ENCODE measurements at regions of chr2 and their contacts with region 1.

Region 1: GRCh38 chr2:22355816-22356433 is 1029.1 kb upstream of the KLHL29 start:
- DNase-seq: peak in 4 of 5 donors; percentile 15 to 41 (median 36)
- ATAC-seq: peak in 1 of 4 donors; percentile 46
- H3K4me3 ChIP-seq: no peak overlapping the region
- H3K27ac ChIP-seq: no peak overlapping the region
- H3K4me1 ChIP-seq: no peaks in the 10 kb centered on the region
- H3K27me3 ChIP-seq: no peaks in the 10 kb centered on the region
- CTCF ChIP-seq: peak; percentile 68 to 89 (median 80)
- POLR2A ChIP-seq: no peak

Region 2: GRCh38 chr2:23346029-23346428 is 990.1 kb after region 1 on chr2:
- intact Hi-C with region 1: loop called in 4 of 10 experiments (anchors 2 to 10 kb)
- DNase-seq: no peak
- ATAC-seq: no peak
- H3K4me3 ChIP-seq: no peak overlapping the region
- H3K27ac ChIP-seq: no peak overlapping the region
- H3K4me1 ChIP-seq: peaks cover 0 to 7% (median 0%) of the 10 kb centered on the region in 12 donors
- H3K27me3 ChIP-seq: no peaks in the 10 kb centered on the region
- CTCF ChIP-seq: no peak
- POLR2A ChIP-seq: no peak

Region 3: DNA sequence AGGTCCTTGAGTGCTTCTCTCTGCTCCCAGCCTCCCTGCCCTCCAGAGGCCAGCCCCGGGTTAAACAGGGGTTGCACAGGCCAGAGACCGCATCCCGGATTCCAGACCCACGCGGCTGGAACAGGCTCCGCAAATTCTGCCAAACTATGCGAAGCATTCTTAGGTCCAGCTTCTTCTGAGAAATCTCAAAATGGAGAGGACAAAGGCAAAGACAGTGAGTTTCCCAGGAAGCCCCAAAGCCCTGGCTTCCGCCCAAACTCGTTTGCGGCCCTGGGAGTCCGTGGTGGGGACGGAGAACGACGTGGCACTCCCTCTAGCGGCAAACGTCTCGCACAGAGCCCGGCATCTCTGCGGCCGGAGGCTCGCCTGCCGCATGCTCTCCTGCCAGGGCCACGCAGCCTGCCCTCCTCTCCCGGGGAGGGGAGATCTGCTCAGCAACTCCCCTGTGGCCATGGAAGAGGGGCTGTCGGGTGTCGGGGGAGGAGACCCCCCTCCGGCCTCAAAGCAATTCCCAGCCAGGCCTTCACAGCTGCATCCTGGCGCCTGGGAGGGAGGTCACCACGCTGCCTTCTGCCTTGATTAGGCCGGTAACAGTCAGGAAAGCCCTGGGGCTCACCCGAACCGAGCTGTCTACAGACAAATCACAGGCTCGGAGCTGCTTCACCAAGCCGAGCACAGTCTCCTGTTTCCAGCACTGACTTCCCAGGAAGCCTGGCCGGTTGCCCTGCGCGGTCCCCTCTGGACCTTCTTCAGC is 995.6 kb after region 1 on chr2:
- intact Hi-C with region 1: loop called in 4 of 10 experiments (anchors 2 to 10 kb)
- DNase-seq: peak; percentile 85 to 92 (median 88)
- ATAC-seq: peak; percentile 91 to 97 (median 94)
- H3K4me3 ChIP-seq: peak overlapping the region in 6 of 12 donors; percentile 8 to 44 (median 18)
- H3K27ac ChIP-seq: peak overlapping the region in 11 of 12 donors; percentile 7 to 67 (median 42)
- H3K4me1 ChIP-seq: peaks cover 0 to 19% (median 7%) of the 10 kb centered on the region in 12 donors
- H3K27me3 ChIP-seq: peaks cover 0 to 25% (median 0%) of the 10 kb centered on the region in 9 donors
- CTCF ChIP-seq: peak; percentile 77 to 94 (median 84)
- POLR2A ChIP-seq: no peak

Measured in heart left ventricle (tissue), 16 donors.